WTC11 (cell line): ENCODE measurements at regions of chr7 and their contacts with region 1.

Region 1: GRCh38 chr7:23026164-23026563 is 12.2 kb upstream of the HYCC1 start:
- DNase-seq: no peak
- ATAC-seq: no peak
- H3K4me3 Mint-ChIP-seq: no peak overlapping the region
- H3K27ac Mint-ChIP-seq: no peak overlapping the region
- H3K4me1 Mint-ChIP-seq: peaks cover 4% of the 10 kb centered on the region
- H3K27me3 Mint-ChIP-seq: peaks cover 4% of the 10 kb centered on the region; the same call in 1 of the 2 replicates
- CTCF ChIP-seq: no peak

Region 2: GRCh38 chr7:23013715-23014649 is 12.2 kb before region 1 on chr7 and contains the start of gene HYCC1:
- CTCF ChIA-PET with region 1: interaction called, 10 read pairs
- POLR2A ChIA-PET with region 1: no interaction called
- DNase-seq: peak; percentile 100
- ATAC-seq: peak; percentile 99
- H3K4me3 Mint-ChIP-seq: peak within 1 kb of the TSS; percentile 86
- H3K27ac Mint-ChIP-seq: peak within 1 kb of the TSS; percentile 73
- H3K4me1 Mint-ChIP-seq: peaks cover 17% of the 10 kb centered on the region
- H3K27me3 Mint-ChIP-seq: no peaks in the 10 kb centered on the region
- CTCF ChIP-seq: no peak; the same call in 1 of the 2 replicates
- total RNA-seq, gene HYCC1: 114 to 125 TPM (median 116 TPM) in 3 replicates